A549 (cell line): ENCODE measurements at regions of chr2 and their contacts with region 1.

Region 1: GRCh38 chr2:74529357-74530238 is at the starts of genes AUP1 and HTRA2:
- DNase-seq: peak; percentile 99 to 100
- ATAC-seq: peak; percentile 91 to 97
- H3K4me3 ChIP-seq: peak within 1 kb of the TSS; percentile 57
- H3K27ac ChIP-seq: peak within 1 kb of the TSS; percentile 93 to 96
- H3K4me1 ChIP-seq: peaks cover 17% of the 10 kb centered on the region
- CTCF ChIP-seq: no peak; the same call in 2 of the 3 replicates
- EP300 ChIP-seq: no peak
- POLR2A ChIP-seq: peak; percentile 86
- RAD21 ChIP-seq: peak in 1 of 2 experiments; percentile 20; a peak in 1 of 5 replicates
- polyA plus RNA-seq, gene AUP1: 129 and 181 TPM in 2 replicates
- polyA plus RNA-seq, gene HTRA2: 28.7 and 33.7 TPM in 2 replicates

Region 2: DNA sequence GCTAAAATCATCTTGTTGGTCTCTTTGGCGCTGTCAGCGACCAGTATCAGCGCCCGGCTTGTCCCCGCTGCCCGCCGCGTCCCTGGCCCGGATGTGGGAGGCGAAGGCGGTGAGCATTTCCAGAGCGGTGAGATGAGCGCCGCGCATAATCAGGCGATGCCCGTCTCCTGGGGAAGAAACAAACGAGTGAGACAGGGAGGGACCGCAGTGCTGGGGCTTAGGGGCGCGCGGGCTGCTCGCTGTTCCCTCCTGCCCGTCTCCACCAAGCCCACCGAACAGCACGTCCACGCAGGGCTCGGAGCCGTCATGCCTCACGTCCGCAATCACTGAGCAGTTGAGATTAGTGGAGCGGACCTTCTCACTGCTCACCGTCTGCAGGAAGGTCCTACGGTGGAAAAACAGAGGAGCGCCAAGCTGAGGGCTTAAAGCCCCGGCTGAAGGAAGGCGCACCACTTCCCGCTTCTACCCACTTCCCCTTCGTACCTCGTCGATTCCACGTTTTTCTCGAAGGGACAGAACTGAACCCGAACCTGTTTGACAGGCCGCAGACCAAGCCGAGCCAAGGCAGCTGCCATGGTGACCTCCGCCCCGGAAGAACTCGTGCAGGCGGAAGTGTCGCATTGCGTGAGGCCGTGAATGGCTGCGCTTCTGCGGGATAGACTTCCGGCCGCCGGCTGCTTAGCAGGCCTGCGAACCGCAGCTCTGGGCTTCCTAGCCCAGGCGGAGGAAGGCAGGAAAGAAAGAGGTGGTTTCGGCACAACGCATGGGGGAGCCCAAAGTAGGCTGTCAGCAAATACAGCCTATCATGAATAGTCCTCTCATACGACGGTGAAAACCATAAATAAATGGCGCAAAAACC is 57.3 kb before region 1 on chr2 and contains the start of gene MRPL53:
- CTCF ChIA-PET with region 1: interaction called, 19 read pairs
- POLR2A ChIA-PET with region 1: no interaction called
- DNase-seq: peak; percentile 70 to 98
- ATAC-seq: peak; percentile 93 to 94
- H3K4me3 ChIP-seq: peak within 1 kb of the TSS; percentile 63
- H3K27ac ChIP-seq: peak within 1 kb of the TSS; percentile 86 to 91
- H3K4me1 ChIP-seq: peaks cover 16% of the 10 kb centered on the region
- CTCF ChIP-seq: no peak
- EP300 ChIP-seq: no peak
- POLR2A ChIP-seq: peak; percentile 94
- RAD21 ChIP-seq: no peak
- polyA plus RNA-seq, gene MRPL53: 49.9 and 68.8 TPM in 2 replicates

Region 3: DNA sequence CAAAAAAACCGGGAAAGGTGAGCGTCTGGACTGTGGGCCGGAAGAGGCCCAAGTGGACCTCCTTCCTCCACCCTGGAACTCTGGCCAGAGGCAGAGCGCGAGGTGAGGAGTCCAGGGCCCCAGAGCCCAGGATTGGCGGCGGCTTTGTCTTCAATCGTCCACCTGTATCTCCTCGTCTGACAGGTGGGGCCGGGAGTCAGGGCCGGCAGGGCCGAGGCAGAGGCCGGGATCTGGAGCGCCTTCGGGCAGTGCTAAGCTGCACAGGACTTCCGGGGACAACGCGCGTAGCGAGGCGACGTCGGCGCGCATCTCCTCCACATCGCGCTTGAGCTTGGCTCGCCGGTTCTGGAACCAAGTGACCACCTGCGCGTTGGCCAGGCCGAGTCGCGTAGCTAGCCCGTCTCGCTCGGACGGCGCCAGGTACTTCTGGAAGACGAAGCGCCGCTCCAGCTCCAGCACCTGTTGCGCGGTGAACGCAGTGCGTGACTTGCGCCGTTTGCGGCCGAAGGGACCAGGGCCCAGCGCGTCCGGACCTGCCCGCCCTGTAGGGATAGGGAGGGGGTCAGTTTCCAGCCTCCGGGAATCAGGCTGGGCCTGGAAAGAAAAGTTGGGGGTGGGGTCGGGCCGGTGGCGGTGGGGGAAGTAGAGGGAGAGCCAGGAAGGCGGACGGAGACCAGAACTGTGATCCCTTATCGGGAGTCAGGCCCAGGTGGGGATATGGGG is 31.7 kb before region 1 on chr2:
- CTCF ChIA-PET with region 1: interaction called, 41 read pairs
- POLR2A ChIA-PET with region 1: no interaction called
- DNase-seq: no peak
- ATAC-seq: no peak
- H3K4me3 ChIP-seq: no peak overlapping the region
- H3K27ac ChIP-seq: no peak overlapping the region
- H3K4me1 ChIP-seq: peaks cover 5% of the 10 kb centered on the region; the same call in 2 of the 3 replicates
- CTCF ChIP-seq: no peak
- EP300 ChIP-seq: no peak
- POLR2A ChIP-seq: no peak
- RAD21 ChIP-seq: no peak

Region 4: GRCh38 chr2:74515981-74516633 is 13.5 kb before region 1 on chr2:
- CTCF ChIA-PET with region 1: interaction called, 11 read pairs
- POLR2A ChIA-PET with region 1: interaction called, 4 read pairs
- DNase-seq: no peak
- ATAC-seq: no peak
- H3K4me3 ChIP-seq: no peak overlapping the region
- H3K27ac ChIP-seq: no peak overlapping the region
- H3K4me1 ChIP-seq: peaks cover 6% of the 10 kb centered on the region; the same call in 1 of the 3 replicates
- CTCF ChIP-seq: no peak
- EP300 ChIP-seq: no peak
- POLR2A ChIP-seq: no peak
- RAD21 ChIP-seq: no peak

Region 5: DNA sequence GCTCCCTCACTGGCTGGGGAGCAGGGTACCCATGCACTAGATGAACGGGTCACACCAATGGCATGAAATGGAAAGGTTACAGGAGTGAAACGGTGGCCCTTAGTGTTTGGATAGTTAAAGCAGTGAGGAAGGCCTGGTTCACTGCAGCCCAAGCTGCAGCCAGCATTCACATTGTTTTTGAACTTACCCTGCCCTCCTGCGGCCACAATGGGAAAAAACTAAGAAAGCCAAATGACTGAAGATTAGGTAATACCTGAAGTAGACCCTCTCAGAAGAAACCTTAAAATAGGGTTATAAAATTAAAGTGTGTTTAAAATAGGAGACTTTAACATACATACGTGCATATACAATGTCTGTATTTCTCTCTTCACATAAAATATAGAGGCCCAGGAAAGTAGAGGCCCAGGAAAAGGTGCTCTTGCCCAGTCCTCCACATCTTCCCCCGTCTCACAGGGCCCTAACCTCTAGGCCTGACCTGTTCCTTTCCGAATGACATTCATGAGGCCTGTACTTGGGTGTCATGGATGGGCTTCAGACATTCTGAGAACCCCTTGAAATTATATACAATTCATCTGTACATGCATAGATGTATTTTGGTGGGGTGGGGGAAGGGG is 58.2 kb after region 1 on chr2:
- CTCF ChIA-PET with region 1: interaction called, 92 read pairs
- POLR2A ChIA-PET with region 1: interaction called, 9 read pairs
- DNase-seq: peak; percentile 77 to 82
- ATAC-seq: peak; percentile 91 to 92
- H3K4me3 ChIP-seq: no peak overlapping the region
- H3K27ac ChIP-seq: no peak overlapping the region
- H3K4me1 ChIP-seq: peaks cover 14% of the 10 kb centered on the region
- CTCF ChIP-seq: peak; percentile 91
- EP300 ChIP-seq: no peak
- POLR2A ChIP-seq: no peak
- RAD21 ChIP-seq: peak; percentile 93 to 95